ENCODE measurements at regions of chr5 and their contacts with region 1.

Region 1: GRCh38 chr5:23223846-23224245 is 283.6 kb upstream of the PRDM9 start:
- DNase-seq: no peak
- CTCF ChIP-seq: no peak

Region 2: GRCh38 chr5:22908129-22908528 is 315.7 kb before region 1 on chr5:
- CTCF ChIA-PET with region 1: no interaction called
- POLR2A ChIA-PET with region 1: no interaction called
- DNase-seq: no peak
- CTCF ChIP-seq: no peak

Region 3: GRCh38 chr5:23208959-23209431 is 14.9 kb before region 1 on chr5:
- CTCF ChIA-PET with region 1: interaction called, 14 read pairs
- POLR2A ChIA-PET with region 1: no interaction called
- DNase-seq: peak; percentile 42
- CTCF ChIP-seq: peak; percentile 76